Dorsolateral prefrontal cortex (tissue), 120 donors: ENCODE measurements at regions of chr2 and their contacts with region 1.

Region 1: GRCh38 chr2:235106874-235107639 is 155.2 kb downstream of the SH3BP4 start:
- DNase-seq: peak in 8 of 10 donors; percentile 15 to 80 (median 67)
- H3K4me3 ChIP-seq: no peak overlapping the region
- H3K27ac ChIP-seq: no peak overlapping the region
- H3K27me3 ChIP-seq: no peaks in the 10 kb centered on the region
- CTCF ChIP-seq: peak in 55 of 56 donors; percentile 20 to 84 (median 67)

Region 2: GRCh38 chr2:234544659-234545611 is 562.1 kb before region 1 on chr2:
- intact Hi-C with region 1: loop called (anchors 2 to 5 kb)
- DNase-seq: peak; percentile 50 to 78 (median 64)
- H3K4me3 ChIP-seq: peak overlapping the region in 4 of 59 donors; percentile 2 to 33 (median 12)
- H3K27ac ChIP-seq: no peak overlapping the region
- H3K27me3 ChIP-seq: peaks cover 0 to 12% (median 0%) of the 10 kb centered on the region in 45 donors
- CTCF ChIP-seq: peak; percentile 73 to 98 (median 94)

Region 3: GRCh38 chr2:234550511-234551107 is 556.4 kb before region 1 on chr2:
- intact Hi-C with region 1: loop called (anchors 2 to 5 kb)
- DNase-seq: peak in 8 of 10 donors; percentile 37 to 71 (median 58)
- H3K4me3 ChIP-seq: peak overlapping the region in 2 of 59 donors; percentile 8 to 20
- H3K27ac ChIP-seq: no peak overlapping the region
- H3K27me3 ChIP-seq: peaks cover 0 to 12% (median 0%) of the 10 kb centered on the region in 45 donors
- CTCF ChIP-seq: peak; percentile 57 to 99 (median 96)

Region 4: DNA sequence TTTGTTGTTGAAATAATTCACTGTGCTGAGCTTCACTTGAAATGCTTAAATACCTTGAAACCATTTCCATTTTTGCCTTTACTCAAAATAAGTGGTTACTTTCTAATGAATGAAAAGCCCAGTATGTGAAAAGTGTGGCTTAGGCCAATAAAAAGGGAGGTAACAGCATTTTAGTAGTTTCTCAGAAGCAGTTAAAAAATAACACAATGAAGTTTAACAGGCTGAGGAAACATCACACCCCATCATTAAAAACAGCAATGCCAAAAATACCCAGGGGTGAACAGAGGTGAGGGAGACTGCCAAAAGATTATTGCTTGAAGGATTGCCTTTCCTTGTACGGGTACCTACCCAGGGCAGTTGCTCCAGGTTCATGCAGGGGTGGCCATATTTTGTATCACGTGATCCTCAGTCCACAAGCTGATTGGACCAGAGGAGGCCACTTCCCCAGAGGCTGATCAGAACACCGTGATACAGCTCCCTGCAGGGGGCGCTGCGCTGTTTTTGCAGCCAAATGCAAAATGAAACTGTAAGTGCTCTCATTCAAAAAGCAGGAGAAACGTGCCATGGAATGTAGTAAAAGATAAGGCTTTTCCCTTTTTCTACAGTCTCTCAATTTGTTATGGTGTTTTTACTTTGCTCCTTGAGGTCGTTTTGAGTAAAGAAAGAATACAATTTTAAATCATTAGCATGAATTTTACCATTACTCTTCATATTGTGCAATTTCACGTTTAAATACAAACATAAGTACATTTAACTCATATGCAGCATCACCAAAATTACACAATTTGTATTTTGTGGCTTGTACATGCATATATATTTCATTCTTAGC is 225.4 kb before region 1 on chr2:
- intact Hi-C with region 1: loop called (anchors 5 kb)
- DNase-seq: peak; percentile 23 to 93 (median 86)
- H3K4me3 ChIP-seq: peak overlapping the region in 53 of 59 donors; percentile 6 to 62 (median 38)
- H3K27ac ChIP-seq: peak overlapping the region in 37 of 59 donors; percentile 1 to 74 (median 51)
- H3K27me3 ChIP-seq: peaks cover 0 to 6% (median 0%) of the 10 kb centered on the region in 45 donors
- CTCF ChIP-seq: peak; percentile 61 to 98 (median 88)

Region 5: DNA sequence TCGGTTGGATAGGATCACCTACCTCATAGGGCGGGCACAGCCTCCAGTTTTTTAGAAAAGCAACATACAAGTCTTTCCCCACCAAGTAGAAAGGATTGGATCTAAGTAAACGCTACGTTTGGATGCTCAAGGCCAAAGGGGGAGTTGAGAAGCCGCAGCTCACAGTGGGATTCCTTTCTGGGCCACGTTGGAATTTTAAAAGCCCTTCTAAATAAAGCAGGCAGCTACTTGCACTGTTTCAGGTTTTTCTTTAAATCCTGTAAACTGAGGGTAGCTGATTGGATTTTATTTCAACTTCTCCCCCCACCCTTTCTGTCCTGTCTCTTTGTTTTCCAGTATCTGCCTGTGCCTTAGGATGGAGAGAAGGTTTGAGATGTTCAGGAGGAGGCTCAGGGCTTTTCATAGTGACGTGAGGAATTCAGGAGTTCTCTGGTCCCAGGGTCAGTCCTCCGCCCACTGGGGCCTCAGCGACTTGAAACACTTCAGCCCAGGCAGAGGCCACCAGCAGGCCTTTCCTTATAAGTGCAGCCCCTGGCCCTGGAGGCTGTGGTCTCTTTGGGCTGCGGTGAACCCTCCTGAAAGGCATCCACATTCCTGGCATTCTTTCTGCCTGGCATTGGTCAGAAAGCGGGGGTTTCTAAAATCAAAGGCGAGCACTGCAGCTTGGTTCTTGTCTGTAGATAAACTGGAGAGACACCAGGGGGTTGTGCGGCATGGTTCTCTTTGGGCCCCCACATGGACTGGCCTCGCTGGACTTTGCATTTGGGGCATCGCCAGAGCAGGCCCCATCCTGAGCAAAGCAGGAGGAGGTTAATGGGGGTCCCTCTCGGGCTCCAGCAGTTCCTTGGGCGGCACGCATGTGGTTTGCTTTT is 110.8 kb before region 1 on chr2:
- intact Hi-C with region 1: loop called in 1 of 2 experiments (anchors 10 kb)
- DNase-seq: no peak
- H3K4me3 ChIP-seq: no peak overlapping the region
- H3K27ac ChIP-seq: peak overlapping the region in 58 of 59 donors; percentile 3 to 89 (median 75)
- H3K27me3 ChIP-seq: no peaks in the 10 kb centered on the region
- CTCF ChIP-seq: no peak

Region 6: DNA sequence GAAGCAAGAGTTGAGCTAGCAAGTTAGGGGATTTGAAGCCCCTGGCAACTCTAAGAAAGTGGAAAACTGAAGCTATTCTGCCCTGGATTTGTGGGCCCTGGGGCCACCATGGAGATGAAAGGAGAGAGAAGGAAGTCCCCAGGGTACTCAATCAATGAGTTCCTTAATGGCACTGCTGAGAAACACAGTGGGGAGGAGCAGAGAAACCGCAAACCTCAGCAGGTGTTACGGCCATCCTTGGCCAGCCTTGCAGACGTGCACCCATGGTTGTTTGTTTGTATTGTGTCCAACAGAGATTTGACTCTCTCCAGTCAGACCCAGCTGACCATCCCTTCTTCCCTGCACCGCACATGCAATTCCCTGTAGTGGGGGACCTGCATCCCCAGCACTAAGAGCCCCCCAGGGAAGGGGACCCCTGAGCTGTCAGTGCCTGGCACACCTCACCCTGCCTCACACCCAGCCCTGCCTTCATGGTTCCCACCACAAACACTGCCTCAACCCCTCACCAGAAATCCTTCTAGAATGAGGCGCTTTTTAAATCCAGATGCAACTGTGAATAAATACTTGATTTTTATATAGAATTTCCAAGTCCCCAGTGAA is 100.0 kb after region 1 on chr2:
- intact Hi-C with region 1: no loop called
- DNase-seq: no peak
- H3K4me3 ChIP-seq: no peak overlapping the region
- H3K27ac ChIP-seq: no peak overlapping the region
- H3K27me3 ChIP-seq: peaks cover 0 to 7% (median 0%) of the 10 kb centered on the region in 45 donors
- CTCF ChIP-seq: no peak